Gastrocnemius medialis (tissue), 4 donors: ENCODE measurements at regions of chr20 and their contacts with region 1.

Region 1: DNA sequence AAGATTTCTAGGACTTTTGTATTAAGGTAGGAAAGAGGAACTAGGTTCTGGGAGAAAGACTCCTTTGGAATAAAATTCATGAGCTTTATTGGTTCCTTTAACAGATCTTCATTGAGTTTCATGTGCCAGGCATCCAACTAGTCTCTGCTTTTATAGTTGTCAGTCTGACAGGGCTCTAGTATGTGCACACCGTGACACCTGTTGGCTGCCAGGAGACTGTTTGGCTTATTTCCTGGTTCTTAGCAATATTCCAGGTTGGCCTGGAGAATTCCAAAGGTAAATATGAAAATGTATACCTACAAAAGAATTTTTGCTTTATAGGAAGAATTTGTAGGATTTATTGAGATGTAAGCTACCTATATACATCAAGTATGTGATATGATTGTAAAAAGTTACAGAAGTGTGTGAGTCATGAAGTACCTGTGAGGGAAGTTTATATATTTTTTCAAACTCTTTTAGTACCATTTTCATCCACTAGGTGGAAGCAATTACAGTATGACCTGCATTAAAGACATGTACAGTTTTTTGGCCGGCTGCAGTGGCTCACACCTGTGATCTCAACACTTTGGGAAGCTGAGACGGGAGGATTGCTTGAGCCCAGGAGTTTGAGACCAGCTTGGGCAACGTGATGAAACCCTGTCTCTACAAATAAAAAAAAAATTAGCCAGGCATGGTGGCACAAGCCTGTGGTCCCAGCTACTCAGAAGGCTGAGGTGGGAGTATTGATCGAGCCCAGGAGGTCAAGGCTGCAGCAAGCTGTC is 35.2 kb downstream of the NDUFAF5 start:
- DNase-seq: peak; percentile 48 to 80
- ATAC-seq: peak; percentile 75 to 83
- H3K4me3 ChIP-seq: no peak overlapping the region
- H3K27ac ChIP-seq: peak overlapping the region in 3 of 4 donors; percentile 13 to 43 (median 27)
- H3K4me1 ChIP-seq: peaks cover 0 to 3% of the 10 kb centered on the region in 2 donors
- H3K27me3 ChIP-seq: no peaks in the 10 kb centered on the region
- CTCF ChIP-seq: peak; percentile 66 to 80 (median 69)
- POLR2A ChIP-seq: no peak

Region 2: DNA sequence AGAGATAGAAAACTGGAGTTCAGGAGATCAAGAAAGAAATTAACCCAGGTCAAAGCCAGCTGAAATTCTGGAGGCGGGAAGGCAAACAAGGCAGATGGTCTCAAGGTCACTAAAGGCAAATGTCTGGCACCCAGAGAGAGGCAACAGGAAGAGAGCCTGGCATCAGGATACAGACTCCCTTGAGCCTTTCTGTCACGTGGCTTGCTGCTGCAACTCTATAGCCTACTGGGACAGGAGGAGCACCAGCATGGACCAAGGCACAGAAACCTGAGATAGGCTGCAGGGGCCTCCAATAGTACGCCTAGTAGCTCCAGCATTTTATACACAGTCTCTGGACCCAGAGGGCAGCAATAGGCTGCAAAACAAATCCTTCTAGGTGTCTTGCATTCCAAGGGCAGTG is 95.2 kb after region 1 on chr20:
- in situ Hi-C with region 1: no loop called
- intact Hi-C with region 1: loop called (anchors 10 kb)
- DNase-seq: no peak
- ATAC-seq: no peak
- H3K4me3 ChIP-seq: no peak overlapping the region
- H3K27ac ChIP-seq: no peak overlapping the region
- H3K4me1 ChIP-seq: peaks cover 4 to 5% of the 10 kb centered on the region in 2 donors
- H3K27me3 ChIP-seq: no peaks in the 10 kb centered on the region
- CTCF ChIP-seq: no peak
- POLR2A ChIP-seq: no peak

Region 3: GRCh38 chr20:13995081-13995694 is 175.1 kb after region 1 on chr20 and contains the start of gene MACROD2:
- in situ Hi-C with region 1: no loop called
- intact Hi-C with region 1: loop called (anchors 2 kb)
- DNase-seq: peak; percentile 74 to 90
- ATAC-seq: peak; percentile 92 to 96
- H3K4me3 ChIP-seq: peak within 1 kb of the TSS; percentile 68 to 80 (median 76)
- H3K27ac ChIP-seq: peak within 1 kb of the TSS; percentile 84 to 87 (median 86)
- H3K4me1 ChIP-seq: no peaks in the 10 kb centered on the region
- H3K27me3 ChIP-seq: no peaks in the 10 kb centered on the region
- CTCF ChIP-seq: no peak
- POLR2A ChIP-seq: peak; percentile 64 to 87
- total RNA-seq, gene MACROD2: 1.8 to 10.2 (median 3.6) TPM

Region 4: GRCh38 chr20:14055127-14055742 is 235.2 kb after region 1 on chr20:
- in situ Hi-C with region 1: loop called (anchors 5 to 10 kb)
- intact Hi-C with region 1: loop called (anchors 1 kb)
- DNase-seq: no peak
- ATAC-seq: peak; percentile 39 to 58
- H3K4me3 ChIP-seq: no peak overlapping the region
- H3K27ac ChIP-seq: no peak overlapping the region
- H3K4me1 ChIP-seq: no peaks in the 10 kb centered on the region
- H3K27me3 ChIP-seq: no peaks in the 10 kb centered on the region
- CTCF ChIP-seq: peak; percentile 26 to 57 (median 48)
- POLR2A ChIP-seq: no peak